Endothelial cell of umbilical vein (primary cell): ENCODE measurements at regions of chr2 and their contacts with region 1.

Region 1: DNA sequence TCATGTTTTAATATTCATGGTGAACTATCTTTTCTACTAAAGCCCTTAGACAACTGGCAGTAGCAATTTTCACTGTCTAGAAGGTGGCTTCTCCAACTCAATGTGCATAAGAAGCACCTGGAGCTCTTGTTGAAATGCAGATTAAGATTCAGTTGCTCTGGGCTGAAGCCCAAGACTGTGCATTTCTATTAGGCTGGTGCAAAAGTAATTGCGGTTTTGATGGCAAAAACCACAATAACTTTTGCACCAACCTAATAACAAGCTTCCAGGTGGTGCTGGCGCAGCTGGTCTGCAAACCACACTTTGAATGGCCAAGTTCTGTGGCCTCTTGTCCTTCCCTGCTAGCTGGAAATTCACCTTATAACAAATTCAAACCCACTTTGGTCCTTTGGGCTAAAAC is 26.7 kb upstream of the VPS54 start:
- DNase-seq: no peak
- H3K4me3 ChIP-seq: no peak overlapping the region
- H3K27ac ChIP-seq: no peak overlapping the region
- H3K4me1 ChIP-seq: peaks cover 3% of the 10 kb centered on the region
- H3K27me3 ChIP-seq: no peaks in the 10 kb centered on the region
- CTCF ChIP-seq: no peak
- POLR2A ChIP-seq: no peak

Region 2: GRCh38 chr2:64779117-64779690 is 733.3 kb after region 1 on chr2:
- CTCF ChIA-PET with region 1: no interaction called
- POLR2A ChIA-PET with region 1: no interaction called
- dilution Hi-C with region 1: no loop called
- intact Hi-C with region 1: no loop called
- DNase-seq: peak; percentile 88
- H3K4me3 ChIP-seq: no peak overlapping the region
- H3K27ac ChIP-seq: peak overlapping the region; percentile 85
- H3K4me1 ChIP-seq: peaks cover 29% of the 10 kb centered on the region
- H3K27me3 ChIP-seq: no peaks in the 10 kb centered on the region
- CTCF ChIP-seq: no peak
- POLR2A ChIP-seq: no peak

Region 3: GRCh38 chr2:64873472-64873924 is 827.6 kb after region 1 on chr2:
- CTCF ChIA-PET with region 1: no interaction called
- POLR2A ChIA-PET with region 1: no interaction called
- dilution Hi-C with region 1: no loop called
- intact Hi-C with region 1: loop called (anchors 5 kb)
- DNase-seq: peak; percentile 63
- H3K4me3 ChIP-seq: no peak overlapping the region
- H3K27ac ChIP-seq: no peak overlapping the region
- H3K4me1 ChIP-seq: peaks cover 10% of the 10 kb centered on the region
- H3K27me3 ChIP-seq: no peaks in the 10 kb centered on the region
- CTCF ChIP-seq: peak; percentile 95 to 96
- POLR2A ChIP-seq: no peak